ENCODE measurements at regions of chr7 and their contacts with region 1.

Region 1: DNA sequence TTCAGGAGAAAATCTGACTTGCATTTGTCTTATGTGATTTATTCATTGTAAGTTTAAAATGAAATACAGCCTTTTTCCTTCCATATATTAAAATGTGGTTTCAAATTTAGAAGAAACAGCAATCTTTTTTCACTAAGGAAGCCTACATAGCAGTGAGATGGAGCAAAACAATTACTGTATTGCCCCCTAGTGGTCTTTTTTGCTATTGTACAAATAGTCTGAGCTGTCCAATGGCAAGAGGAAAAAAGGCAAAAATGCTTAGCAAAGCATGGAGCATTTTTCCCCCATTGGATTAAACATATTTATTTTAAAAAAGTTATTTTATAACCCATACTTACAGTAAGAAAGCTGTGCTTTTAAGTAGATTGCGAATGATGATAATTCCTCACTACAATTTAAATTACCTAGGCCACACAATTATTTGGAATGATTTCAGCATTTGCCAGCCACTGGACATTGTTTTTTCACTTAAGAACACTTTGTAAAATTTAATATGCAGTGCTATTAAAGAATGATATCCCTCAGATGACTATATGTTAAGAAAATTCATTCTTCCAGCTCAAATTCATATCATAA is 119.5 kb downstream of the CPED1 start:
- DNase-seq: no peak

Region 2: DNA sequence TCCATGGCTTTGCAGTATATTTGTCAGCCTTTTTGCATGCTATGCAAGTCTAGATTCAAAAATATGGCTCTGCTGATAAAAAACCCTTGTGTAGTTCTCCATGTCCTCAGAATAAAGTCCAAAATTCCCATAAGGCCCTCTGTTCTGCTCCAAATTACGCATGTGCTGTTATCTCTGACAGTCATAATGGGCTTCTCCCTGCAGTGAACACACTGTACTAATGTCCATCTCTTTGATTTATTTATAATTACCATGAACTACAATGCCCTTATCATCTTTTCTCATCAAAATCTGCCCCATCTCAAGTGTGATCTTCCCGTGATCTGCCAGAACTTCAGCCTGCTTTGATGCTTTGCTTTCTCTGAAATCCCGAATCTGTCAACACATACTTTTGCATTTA is 337.8 kb before region 1 on chr7:
- intact Hi-C with region 1: no loop called
- DNase-seq: no peak

Region 3: GRCh38 chr7:120792091-120792860 is 315.7 kb before region 1 on chr7:
- intact Hi-C with region 1: loop called (anchors 5 kb)
- DNase-seq: peak; percentile 88

Region 4: GRCh38 chr7:120805636-120806388 is 302.2 kb before region 1 on chr7:
- intact Hi-C with region 1: loop called (anchors 5 kb)
- DNase-seq: no peak

Region 5: GRCh38 chr7:120987683-120988590 is 120.1 kb before region 1 on chr7:
- intact Hi-C with region 1: loop called (anchors 1 kb)
- DNase-seq: peak; percentile 93

Region 6: GRCh38 chr7:121420979-121421378 is 313.0 kb after region 1 on chr7:
- intact Hi-C with region 1: no loop called
- DNase-seq: no peak

Measured in cardiac septum (tissue), 1 donor.